Aorta (tissue), 5 donors: ENCODE measurements at regions of chr7 and their contacts with region 1.

Region 1: DNA sequence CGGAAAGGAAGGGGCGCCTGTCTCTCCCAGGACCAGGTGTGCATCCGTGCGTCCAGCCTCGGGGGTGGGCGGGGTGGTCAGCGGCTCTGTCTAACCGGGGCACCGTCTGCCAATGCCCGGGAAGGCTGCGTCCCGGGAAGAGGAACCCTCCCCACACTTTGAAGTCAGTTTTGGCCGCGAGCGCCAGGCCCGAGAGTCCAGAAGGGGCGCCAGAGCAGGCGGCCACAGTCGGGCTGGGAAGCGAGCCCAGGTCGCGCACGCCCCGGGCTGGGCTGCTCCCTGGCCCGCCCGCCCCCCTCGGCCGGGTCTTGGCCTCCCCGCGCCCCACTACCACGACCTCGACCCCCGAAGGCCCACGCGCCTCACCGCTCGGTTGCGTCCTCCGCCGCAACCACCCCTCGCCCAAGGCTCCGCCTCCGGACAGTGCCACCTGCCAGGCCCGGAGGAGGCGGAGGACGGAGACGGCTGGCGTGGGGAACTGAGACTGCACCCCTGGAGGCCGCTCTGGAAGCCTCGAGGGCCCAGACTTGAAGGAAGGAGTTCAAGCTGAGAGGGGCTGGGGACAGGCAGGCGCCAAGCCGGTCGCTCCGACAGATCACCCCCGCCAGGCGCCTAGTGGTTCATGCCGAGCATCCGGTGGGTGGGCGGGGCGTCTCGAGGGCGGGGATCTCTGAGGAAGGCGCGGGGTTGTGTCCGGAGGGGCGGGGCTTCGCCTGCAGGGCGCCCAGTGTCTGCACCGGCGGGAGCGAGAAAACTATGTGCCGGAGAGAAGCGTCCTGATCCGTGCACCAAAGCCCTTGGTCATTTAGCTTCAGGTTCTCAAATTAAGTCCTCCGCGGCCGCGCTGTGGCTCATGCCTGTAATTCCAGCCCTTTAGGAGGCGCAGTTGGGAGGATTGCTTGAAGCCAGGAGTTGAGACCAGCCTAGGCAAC is at the start of gene BRAT1:
- DNase-seq: peak; percentile 99
- ATAC-seq: peak; percentile 97
- H3K4me3 ChIP-seq: peak within 1 kb of the TSS; percentile 79 to 97
- H3K27ac ChIP-seq: peak within 1 kb of the TSS; percentile 47 to 83
- H3K4me1 ChIP-seq: no peaks in the 10 kb centered on the region
- H3K27me3 ChIP-seq: no peaks in the 10 kb centered on the region
- total RNA-seq, gene BRAT1: 14.8 to 24.3 TPM

Region 2: DNA sequence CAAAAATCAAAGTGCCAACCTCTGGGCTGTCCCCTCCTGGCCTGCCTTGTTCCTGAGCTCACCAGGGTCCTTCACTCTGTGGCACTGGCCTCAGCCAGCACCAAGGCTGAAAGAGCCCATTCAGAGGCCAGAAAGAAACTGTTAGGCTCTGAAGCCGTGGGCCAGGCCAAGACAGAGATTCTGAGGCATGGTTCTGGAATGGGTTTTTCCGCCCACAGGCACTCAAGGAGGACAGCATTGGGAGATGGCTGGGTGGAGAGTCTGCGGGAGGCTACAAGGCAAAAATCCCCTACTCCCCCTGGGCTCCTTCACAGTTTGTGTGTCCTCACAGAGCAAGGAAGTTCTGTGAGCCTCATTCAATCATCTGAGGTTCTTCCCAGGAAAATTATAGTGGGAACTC is 110.9 kb before region 1 on chr7:
- intact Hi-C with region 1: no loop called
- DNase-seq: no peak
- ATAC-seq: peak; percentile 67
- H3K4me3 ChIP-seq: no peak overlapping the region
- H3K27ac ChIP-seq: no peak overlapping the region
- H3K4me1 ChIP-seq: no peaks in the 10 kb centered on the region
- H3K27me3 ChIP-seq: no peaks in the 10 kb centered on the region

Region 3: GRCh38 chr7:2537981-2538851 is 17.2 kb before region 1 on chr7:
- intact Hi-C with region 1: no loop called
- DNase-seq: peak; percentile 45 to 64
- ATAC-seq: no peak
- H3K4me3 ChIP-seq: no peak overlapping the region
- H3K27ac ChIP-seq: no peak overlapping the region
- H3K4me1 ChIP-seq: no peaks in the 10 kb centered on the region
- H3K27me3 ChIP-seq: no peaks in the 10 kb centered on the region

Region 4: GRCh38 chr7:2608921-2609411 is 53.6 kb after region 1 on chr7:
- intact Hi-C with region 1: loop called in 1 of 2 experiments (anchors 5 kb)
- DNase-seq: peak in 1 of 2 donors; percentile 75
- ATAC-seq: no peak
- H3K4me3 ChIP-seq: no peak overlapping the region
- H3K27ac ChIP-seq: no peak overlapping the region
- H3K4me1 ChIP-seq: no peaks in the 10 kb centered on the region
- H3K27me3 ChIP-seq: no peaks in the 10 kb centered on the region